ENCODE measurements at regions of chr11 and their contacts with region 1.

Region 1: GRCh38 chr11:61516675-61517572 is 8.4 kb downstream of the LRRC10B start:
- DNase-seq: peak; percentile 72
- H3K27ac ChIP-seq: no peak overlapping the region
- CTCF ChIP-seq: peak; percentile 97

Region 2: DNA sequence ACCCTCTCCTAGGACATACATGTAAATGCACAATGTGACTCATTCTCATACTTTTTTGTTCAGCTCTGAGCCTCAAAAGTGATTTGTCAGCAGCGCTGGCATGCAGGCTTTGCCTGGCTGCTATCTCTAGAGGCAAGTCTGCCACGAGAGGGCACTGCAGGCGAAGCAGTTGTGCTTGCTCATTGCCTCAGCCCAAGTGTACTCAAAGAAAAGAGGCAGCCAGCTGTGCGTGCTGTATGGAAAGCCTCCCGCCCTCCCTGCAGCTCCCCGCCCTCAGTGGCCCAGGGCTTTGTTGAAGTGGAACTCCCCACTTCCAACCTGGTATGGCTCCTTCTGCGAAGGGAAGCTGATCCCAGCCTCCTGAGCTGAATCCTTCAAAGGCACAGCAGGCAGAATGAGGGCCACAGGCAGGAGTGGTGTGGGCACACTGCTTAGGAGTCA is 70.7 kb before region 1 on chr11:
- CTCF ChIA-PET with region 1: interaction called, 29 read pairs
- POLR2A ChIA-PET with region 1: no interaction called
- DNase-seq: peak; percentile 87
- H3K27ac ChIP-seq: peak overlapping the region; percentile 57
- CTCF ChIP-seq: peak; percentile 89

Region 3: DNA sequence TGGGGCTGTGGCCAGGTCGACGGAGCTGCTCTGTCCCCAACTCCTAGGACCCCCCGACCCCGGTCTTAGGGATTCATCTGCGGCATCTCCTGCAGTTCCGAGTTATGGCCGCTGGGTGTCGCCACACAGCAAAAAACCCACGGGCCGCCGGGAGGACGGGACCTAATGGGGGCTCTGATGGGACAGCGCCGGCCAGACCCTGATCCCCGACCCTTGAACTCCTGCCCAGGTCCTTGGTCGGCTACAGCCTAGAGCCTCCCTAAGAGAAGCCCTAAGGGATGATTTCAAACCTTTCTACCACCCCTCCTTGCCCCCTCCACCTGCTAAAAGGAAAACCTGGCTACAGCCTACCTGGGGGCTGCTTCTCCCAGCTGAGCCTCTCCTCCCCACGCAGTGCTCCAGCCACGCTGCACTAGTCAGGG is 39.2 kb before region 1 on chr11:
- CTCF ChIA-PET with region 1: interaction called, 42 read pairs
- POLR2A ChIA-PET with region 1: no interaction called
- DNase-seq: peak; percentile 53
- H3K27ac ChIP-seq: no peak overlapping the region
- CTCF ChIP-seq: peak; percentile 91

Region 4: GRCh38 chr11:61494381-61494961 is 22.5 kb before region 1 on chr11:
- CTCF ChIA-PET with region 1: interaction called, 11 read pairs
- POLR2A ChIA-PET with region 1: no interaction called
- DNase-seq: no peak
- H3K27ac ChIP-seq: no peak overlapping the region
- CTCF ChIP-seq: no peak

Region 5: DNA sequence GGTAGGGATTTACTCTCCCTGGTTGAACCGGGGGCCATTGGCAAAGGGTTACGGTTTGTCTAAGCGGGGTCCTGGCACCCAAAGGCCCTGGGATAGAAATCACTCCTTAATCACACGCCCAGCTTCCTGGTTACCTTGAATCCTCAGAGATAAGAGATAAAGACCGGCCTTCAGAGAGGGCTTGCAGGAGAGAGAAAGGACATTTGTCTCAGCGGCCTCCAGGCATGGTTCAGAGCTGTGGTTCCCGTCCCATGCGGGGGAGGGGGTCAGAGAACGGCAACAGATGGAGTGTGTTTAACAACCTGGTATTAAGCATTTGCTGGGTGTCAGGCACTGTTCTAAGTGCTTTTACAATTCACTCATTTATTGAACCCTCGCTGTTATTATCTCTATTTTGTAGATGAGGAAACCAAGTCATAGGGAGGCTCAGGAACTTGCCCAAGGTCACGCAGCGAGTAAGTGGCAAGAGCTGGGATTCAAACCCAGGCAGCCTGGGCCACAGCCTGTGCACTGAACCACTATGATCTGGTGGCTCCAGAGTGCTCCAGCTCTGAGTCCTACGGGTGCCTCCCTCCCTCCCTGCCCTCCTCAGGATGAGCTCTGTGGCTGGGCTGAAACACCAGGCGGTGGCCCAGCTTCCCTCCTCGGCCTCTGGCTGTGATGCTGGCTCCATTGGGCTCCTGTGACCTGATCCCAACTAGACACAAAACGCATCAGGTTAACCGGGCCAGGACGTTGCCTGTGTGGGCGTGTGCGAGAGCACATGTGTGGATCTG is 10.2 kb after region 1 on chr11:
- CTCF ChIA-PET with region 1: interaction called, 20 read pairs
- POLR2A ChIA-PET with region 1: no interaction called
- DNase-seq: no peak
- H3K27ac ChIP-seq: no peak overlapping the region
- CTCF ChIP-seq: no peak

Region 6: DNA sequence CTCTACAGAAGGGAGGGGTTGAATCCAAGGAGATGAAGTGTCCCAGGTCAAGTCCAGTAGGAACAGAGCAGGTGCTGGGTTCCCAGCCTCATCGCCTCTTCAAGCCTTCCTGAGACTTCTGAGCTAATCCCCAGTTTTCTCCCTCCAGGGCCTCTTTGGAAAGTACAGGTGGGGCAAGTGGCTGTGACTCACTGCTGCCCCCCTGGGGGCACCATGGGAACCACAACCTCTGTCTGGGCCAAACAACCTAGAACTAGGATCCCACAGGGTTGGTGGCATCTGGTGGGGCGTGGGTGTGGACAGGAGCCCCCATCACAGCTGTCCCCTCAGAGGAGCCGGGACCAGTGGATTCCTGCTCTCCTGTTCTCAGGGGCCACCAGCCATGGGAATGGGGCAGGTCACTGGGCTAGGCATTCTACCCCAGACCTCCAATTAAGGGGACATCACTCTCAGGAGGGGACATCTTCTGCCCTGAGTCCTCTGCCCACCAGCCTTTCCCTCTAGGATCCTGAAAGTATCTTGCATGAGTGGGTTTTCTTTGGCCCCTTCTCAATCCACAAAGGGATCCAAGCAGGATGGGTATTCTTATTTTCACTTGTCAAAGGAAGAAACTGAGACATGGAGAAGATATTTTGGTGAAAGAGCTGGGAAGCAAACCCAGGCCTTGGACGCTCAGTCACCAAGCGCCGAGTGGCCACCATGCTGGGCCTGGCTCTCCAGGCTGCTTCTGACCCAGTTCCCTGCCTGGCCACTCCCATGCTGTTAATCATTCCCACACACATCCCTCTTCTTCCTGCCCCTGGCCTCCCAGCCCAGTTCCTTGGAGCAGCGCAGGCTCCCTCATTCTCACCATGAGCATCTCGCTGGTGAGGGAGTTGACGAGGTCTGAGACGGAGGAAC is 15.5 kb after region 1 on chr11:
- CTCF ChIA-PET with region 1: interaction called, 20 read pairs
- POLR2A ChIA-PET with region 1: no interaction called
- DNase-seq: peak; percentile 65
- H3K27ac ChIP-seq: no peak overlapping the region
- CTCF ChIP-seq: peak; percentile 69

Region 7: GRCh38 chr11:61627567-61628445 is 110.9 kb after region 1 on chr11:
- CTCF ChIA-PET with region 1: interaction called, 11 read pairs
- POLR2A ChIA-PET with region 1: no interaction called
- DNase-seq: peak; percentile 71
- H3K27ac ChIP-seq: peak overlapping the region; percentile 56; the same call in 1 of the 2 replicates
- CTCF ChIP-seq: peak; percentile 80

Measured in RWPE1 (cell line).